ENCODE measurements at regions of chr15 and their contacts with region 1.

Region 1: DNA sequence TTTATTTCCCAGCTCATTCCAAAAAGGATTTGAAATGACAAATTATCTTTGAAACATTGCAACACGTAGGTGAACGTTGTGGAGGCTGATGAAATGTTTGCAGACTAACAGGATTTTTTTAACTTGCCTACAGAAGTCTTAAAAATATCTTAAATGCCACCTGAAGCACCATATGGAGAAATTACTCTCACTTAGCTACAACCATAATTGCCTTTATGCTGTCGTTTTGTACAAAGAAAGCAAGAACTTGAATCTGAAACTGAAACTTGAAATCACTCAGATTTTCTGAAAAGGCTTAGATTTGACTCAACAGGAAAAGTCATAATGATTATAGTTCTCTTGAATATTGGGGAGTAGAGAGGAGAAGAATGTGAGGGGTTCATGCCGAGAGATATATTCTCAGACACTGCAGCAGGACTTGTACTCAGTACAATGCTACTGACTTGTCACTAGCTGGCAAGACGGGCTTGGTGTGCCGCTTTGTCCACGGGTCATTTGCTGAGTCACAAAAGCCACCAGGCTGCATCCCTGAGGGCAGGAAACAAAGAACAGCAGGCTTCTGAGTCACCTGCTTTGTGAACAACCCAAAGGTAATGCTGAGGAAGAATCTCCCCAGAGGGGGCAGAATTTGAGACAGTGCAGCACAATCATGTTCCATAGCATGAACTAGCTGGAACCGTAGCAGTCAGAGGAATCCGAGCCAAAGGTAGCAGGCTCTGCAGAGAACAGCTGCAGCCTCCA is 7.1 kb upstream of the FMN1 start:
- DNase-seq: peak; percentile 66
- H3K4me3 Mint-ChIP-seq: peak overlapping the region; percentile 53
- H3K27ac Mint-ChIP-seq: peak overlapping the region; percentile 80
- H3K4me1 Mint-ChIP-seq: peaks cover 27% of the 10 kb centered on the region
- H3K27me3 Mint-ChIP-seq: peaks cover 9% of the 10 kb centered on the region

Region 2: DNA sequence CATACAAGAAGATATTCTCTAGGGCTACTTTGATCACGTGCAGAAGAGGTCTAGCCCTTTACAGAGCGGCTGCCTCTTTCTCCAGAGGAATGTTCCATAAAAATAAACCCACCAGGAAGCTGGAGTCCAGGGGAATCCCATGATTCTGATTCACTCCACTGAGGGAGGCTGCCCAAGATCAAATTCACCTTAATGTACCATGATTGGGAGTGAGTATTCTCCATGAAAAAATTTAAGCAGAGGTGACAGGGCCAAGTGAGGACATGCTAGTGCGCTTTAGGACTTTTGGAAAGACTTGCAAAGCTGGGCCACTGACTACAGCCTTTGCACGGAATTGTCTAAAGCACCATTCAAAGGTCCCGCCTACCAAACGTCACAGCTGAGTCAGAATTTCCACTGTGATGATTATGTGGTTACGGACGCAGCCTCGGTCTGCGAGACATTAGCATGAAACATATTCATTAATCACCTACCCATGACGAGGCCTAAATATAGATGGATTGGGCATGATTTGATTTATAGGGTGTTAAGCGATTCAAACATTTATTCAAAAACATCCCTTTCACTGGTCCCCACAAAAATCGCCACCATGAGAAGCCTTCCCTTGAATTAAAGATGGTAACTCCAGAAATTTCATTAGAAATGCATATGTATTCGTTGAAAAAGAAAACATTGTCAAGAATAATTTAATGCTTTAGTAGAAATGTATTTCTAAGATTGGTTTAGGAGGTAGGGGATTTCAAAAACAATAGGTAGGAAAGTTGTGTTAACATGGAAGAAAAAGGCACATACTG is 331.2 kb before region 1 on chr15:
- CTCF ChIA-PET with region 1: no interaction called
- DNase-seq: no peak
- H3K4me3 Mint-ChIP-seq: no peak overlapping the region
- H3K27ac Mint-ChIP-seq: no peak overlapping the region
- H3K4me1 Mint-ChIP-seq: no peaks in the 10 kb centered on the region
- H3K27me3 Mint-ChIP-seq: no peaks in the 10 kb centered on the region

Region 3: DNA sequence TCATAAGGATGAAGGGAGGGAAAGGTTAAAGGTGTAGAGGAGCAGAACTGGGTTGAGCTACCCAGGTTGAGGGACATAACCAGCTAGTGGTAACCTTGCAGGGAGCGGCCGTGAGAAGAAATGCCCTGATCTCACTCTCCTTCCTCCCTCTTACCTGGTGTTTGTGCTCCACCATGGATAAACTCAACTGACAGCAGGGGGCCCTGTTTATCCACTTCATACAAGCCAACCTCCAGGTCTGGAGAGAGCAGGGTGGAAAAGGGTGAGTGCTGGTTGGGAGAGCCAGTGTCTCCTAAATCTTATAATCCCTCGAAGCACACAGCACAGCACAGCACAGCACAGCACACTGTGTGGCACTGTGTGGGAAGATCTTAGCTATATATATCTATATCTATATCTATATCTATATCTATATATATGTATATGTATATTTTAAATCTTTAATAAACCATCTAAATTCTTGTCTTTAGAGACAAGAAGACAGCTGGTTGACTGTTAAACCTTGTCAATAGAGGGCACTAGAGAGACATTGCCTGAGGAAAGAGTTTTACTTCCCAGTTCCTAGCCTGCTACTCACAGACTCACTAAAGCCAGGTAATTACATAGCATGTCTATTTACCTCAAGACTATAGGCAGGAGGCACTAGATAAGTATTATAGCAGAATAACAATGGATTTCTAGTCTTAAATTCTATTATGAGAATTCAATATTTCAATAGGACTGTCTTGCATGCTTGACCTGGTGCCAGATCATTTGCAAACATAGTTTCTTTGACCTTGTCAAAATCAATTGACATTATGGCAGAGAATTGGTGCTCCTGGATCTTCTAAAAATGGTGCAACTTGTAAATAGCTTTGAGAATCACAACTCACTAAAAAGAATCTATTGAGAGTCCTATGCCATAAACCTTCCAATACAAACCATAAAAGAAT is 14.5 kb after region 1 on chr15:
- CTCF ChIA-PET with region 1: interaction called, 26 read pairs
- DNase-seq: no peak
- H3K4me3 Mint-ChIP-seq: no peak overlapping the region
- H3K27ac Mint-ChIP-seq: no peak overlapping the region
- H3K4me1 Mint-ChIP-seq: no peaks in the 10 kb centered on the region
- H3K27me3 Mint-ChIP-seq: no peaks in the 10 kb centered on the region

Measured in activated naive CD4-positive, alpha-beta T cell treated with anti-CD3 and anti-CD28 coated beads, Interleukin-2, amount 10 ng/mL, durations not matched to agents 7 days and 5 days (primary cell).